Activated CD4-positive, alpha-beta memory T cell treated with anti-CD3 and anti-CD28 coated beads for 36 hours (primary cell): ENCODE measurements at regions of chr3 and their contacts with region 1.

Region 1: GRCh38 chr3:8441969-8442559 is 59.6 kb upstream of the LMCD1 start:
- DNase-seq: no peak
- H3K4me3 Mint-ChIP-seq: no peak overlapping the region
- H3K27ac Mint-ChIP-seq: no peak overlapping the region
- H3K4me1 Mint-ChIP-seq: no peaks in the 10 kb centered on the region
- H3K27me3 Mint-ChIP-seq: peaks cover 1% of the 10 kb centered on the region

Region 2: DNA sequence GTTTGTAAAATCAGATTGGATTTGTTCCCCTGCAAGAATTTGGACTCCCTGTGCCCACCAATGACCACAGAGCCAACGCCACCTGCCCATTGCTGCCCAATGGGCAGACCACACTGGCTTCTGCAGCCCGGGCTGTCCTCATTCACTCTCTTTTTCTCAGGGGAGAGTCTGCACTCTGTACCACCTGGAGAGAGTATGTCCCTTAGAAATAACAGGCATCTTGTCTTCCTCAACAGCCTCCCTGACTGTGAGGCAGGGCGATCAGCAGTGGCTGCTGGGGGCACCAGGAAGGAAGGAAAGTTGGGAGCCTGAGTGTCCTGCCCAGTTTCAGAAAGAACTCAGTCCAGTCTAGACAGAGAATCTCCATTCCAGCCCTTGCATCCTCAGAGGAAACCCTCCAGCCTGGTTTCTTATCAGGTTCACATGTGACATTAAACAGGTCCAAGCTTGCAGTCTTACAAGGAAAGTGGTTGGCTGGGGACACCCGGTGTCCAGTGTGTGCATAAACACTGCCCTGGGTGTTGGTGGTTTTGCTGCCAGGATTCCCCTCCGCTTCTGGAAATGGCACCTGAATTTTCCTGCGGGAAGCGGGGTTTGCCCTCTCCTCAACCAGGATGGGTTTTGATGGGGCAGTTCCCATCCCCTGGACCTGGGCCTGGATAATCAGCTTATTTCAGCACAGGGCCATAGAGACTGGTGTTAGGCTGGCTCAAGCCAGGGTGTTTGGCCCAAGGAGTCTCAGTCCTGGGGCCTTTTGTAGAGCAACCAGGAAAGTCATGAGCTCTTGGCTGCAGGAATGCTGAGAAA is 165.4 kb after region 1 on chr3:
- CTCF ChIA-PET with region 1: no interaction called
- POLR2A ChIA-PET with region 1: no interaction called
- intact Hi-C with region 1: loop called (anchors 5 kb)
- DNase-seq: peak; percentile 16
- H3K4me3 Mint-ChIP-seq: no peak overlapping the region
- H3K27ac Mint-ChIP-seq: no peak overlapping the region
- H3K4me1 Mint-ChIP-seq: no peaks in the 10 kb centered on the region
- H3K27me3 Mint-ChIP-seq: peaks cover 5% of the 10 kb centered on the region

Region 3: DNA sequence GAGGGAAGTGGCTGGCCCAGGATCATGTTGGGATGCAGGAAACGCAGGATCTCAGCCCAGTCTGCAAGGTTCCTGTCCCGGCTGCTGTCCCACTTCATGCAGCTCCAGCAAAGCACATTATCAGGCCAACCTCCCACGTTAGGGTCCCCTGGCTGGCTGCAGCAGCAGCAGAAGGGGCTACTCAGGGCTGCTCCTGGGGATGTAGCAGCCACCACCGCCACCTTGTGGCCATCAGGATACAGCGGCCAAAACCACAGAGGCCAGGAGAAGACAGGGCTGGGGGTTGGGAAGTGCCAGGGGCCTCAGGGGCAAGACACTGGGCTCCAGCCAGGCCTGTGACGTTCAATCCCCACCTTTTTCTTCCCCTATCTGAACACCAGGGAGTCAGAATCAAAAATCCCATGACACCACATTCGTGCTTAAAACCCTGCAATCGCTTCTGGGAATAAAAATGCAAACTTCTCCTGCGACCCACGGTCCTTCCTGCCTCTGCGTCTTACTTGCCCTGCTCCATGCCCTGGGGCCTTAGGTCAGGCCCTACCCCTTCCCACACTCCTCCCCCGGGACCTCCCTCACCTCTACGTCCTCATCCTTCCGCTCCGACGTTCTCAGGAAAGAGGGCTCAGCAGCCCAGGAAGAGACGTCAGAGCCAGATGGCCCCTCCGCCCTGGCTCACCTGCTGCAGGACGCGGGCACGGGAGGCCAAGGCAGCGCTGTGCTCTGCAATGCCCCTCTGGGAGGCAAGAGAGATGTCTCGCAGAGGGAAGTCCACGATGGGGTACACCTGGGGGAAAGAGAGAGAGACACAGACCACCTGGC is 181.0 kb after region 1 on chr3:
- CTCF ChIA-PET with region 1: interaction called, 10 read pairs
- POLR2A ChIA-PET with region 1: no interaction called
- intact Hi-C with region 1: loop called (anchors 1 kb)
- DNase-seq: peak; percentile 68
- H3K4me3 Mint-ChIP-seq: peak overlapping the region; percentile 23
- H3K27ac Mint-ChIP-seq: no peak overlapping the region
- H3K4me1 Mint-ChIP-seq: peaks cover 10% of the 10 kb centered on the region
- H3K27me3 Mint-ChIP-seq: peaks cover 9% of the 10 kb centered on the region

Region 4: GRCh38 chr3:8741581-8742261 is 299.7 kb after region 1 on chr3:
- CTCF ChIA-PET with region 1: no interaction called
- POLR2A ChIA-PET with region 1: no interaction called
- intact Hi-C with region 1: no loop called
- DNase-seq: no peak
- H3K4me3 Mint-ChIP-seq: no peak overlapping the region
- H3K27ac Mint-ChIP-seq: no peak overlapping the region
- H3K4me1 Mint-ChIP-seq: no peaks in the 10 kb centered on the region
- H3K27me3 Mint-ChIP-seq: peaks cover 10% of the 10 kb centered on the region